ENCODE measurements at regions of chr12 and their contacts with region 1.

Region 1: DNA sequence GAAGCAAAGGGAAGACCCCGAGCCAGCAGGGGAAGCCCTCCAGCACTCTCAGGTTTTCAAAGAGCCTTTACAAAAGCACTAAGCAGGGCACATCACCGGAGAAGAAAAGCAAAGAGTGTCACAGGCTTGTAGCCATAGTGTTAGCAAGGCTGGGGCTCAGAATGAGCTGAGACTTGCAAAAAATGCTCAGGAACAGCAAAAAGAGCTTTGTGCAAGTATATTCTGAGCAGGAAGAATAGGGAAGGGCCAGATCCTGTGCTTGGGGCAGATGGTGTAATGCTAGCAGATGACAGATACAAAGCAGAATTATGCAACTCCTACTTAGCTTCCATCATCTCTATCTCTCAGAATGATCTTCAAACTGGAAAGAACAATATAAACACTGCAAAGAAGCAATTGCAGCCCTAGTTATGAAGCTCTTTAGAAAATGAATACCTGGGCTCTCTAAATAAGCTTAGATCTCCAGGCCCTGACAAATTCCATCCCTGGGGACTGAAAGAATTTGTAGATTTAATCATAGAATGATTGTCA is 23.7 kb upstream of the PARP11 start:
- DNase-seq: no peak
- H3K4me3 Mint-ChIP-seq: peak overlapping the region; percentile 16
- H3K27ac Mint-ChIP-seq: peak overlapping the region; percentile 89
- H3K4me1 Mint-ChIP-seq: peaks cover 41% of the 10 kb centered on the region
- H3K27me3 Mint-ChIP-seq: no peaks in the 10 kb centered on the region

Region 2: GRCh38 chr12:3964439-3964838 is 67.6 kb after region 1 on chr12:
- CTCF ChIA-PET with region 1: interaction called, 5 read pairs
- POLR2A ChIA-PET with region 1: no interaction called
- intact Hi-C with region 1: loop called (anchors 2 kb)
- DNase-seq: no peak
- H3K4me3 Mint-ChIP-seq: no peak overlapping the region
- H3K27ac Mint-ChIP-seq: no peak overlapping the region
- H3K4me1 Mint-ChIP-seq: peaks cover 18% of the 10 kb centered on the region
- H3K27me3 Mint-ChIP-seq: no peaks in the 10 kb centered on the region

Region 3: GRCh38 chr12:3973978-3974644 is 77.2 kb after region 1 on chr12:
- CTCF ChIA-PET with region 1: no interaction called
- POLR2A ChIA-PET with region 1: no interaction called
- intact Hi-C with region 1: loop called (anchors 1 kb)
- DNase-seq: peak; percentile 35
- H3K4me3 Mint-ChIP-seq: peak overlapping the region; percentile 31
- H3K27ac Mint-ChIP-seq: peak overlapping the region; percentile 74
- H3K4me1 Mint-ChIP-seq: peaks cover 53% of the 10 kb centered on the region
- H3K27me3 Mint-ChIP-seq: no peaks in the 10 kb centered on the region